ENCODE measurements at regions of chr19 and their contacts with region 1.

Region 1: DNA sequence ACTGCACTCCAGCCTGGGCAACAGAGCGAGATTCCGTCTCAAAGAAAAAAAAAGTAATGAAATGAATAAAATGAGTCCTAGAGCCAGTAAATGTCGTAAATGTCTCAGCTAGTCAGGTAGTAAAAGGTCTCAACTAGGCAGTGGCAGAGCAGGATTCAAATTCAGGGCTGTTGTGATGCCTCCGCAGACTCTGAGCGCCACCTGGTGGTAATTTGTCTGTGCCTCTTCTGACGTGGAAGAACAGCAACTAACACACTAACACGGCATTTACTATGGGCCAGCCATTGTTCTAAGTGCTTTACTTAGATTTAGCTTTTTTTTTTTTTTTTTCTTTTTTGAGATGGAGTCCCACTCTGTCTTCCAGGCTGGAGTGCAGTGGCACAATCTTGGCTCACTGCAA is 30.2 kb downstream of the CYP2F1 start:
- DNase-seq: peak; percentile 82
- H3K4me3 ChIP-seq: no peak overlapping the region
- H3K4me3 Mint-ChIP-seq: no peak overlapping the region
- H3K27ac Mint-ChIP-seq: no peak overlapping the region
- H3K4me1 ChIP-seq: no peaks in the 10 kb centered on the region
- H3K4me1 Mint-ChIP-seq: no peaks in the 10 kb centered on the region
- H3K27me3 ChIP-seq: no peaks in the 10 kb centered on the region
- H3K27me3 Mint-ChIP-seq: no peaks in the 10 kb centered on the region
- CTCF ChIP-seq: peak; percentile 75 to 77

Region 2: GRCh38 chr19:40662921-40663694 is 481.3 kb before region 1 on chr19:
- CTCF ChIA-PET with region 1: no interaction called
- POLR2A ChIA-PET with region 1: no interaction called
- intact Hi-C with region 1: loop called (anchors 2 kb)
- DNase-seq: peak; percentile 88 to 95
- H3K4me3 ChIP-seq: peak overlapping the region; percentile 86
- H3K4me3 Mint-ChIP-seq: peak overlapping the region; percentile 82
- H3K27ac Mint-ChIP-seq: peak overlapping the region; percentile 68
- H3K4me1 ChIP-seq: no peaks in the 10 kb centered on the region
- H3K4me1 Mint-ChIP-seq: no peaks in the 10 kb centered on the region
- H3K27me3 ChIP-seq: no peaks in the 10 kb centered on the region
- H3K27me3 Mint-ChIP-seq: no peaks in the 10 kb centered on the region
- CTCF ChIP-seq: peak; percentile 94 to 98

Region 3: GRCh38 chr19:40974633-40975037 is 169.8 kb before region 1 on chr19:
- CTCF ChIA-PET with region 1: no interaction called
- POLR2A ChIA-PET with region 1: no interaction called
- intact Hi-C with region 1: loop called (anchors 1 kb)
- DNase-seq: peak; percentile 68 to 69
- H3K4me3 ChIP-seq: no peak overlapping the region
- H3K4me3 Mint-ChIP-seq: no peak overlapping the region
- H3K27ac Mint-ChIP-seq: no peak overlapping the region
- H3K4me1 ChIP-seq: peaks cover 2% of the 10 kb centered on the region
- H3K4me1 Mint-ChIP-seq: peaks cover 3% of the 10 kb centered on the region
- H3K27me3 ChIP-seq: no peaks in the 10 kb centered on the region
- H3K27me3 Mint-ChIP-seq: no peaks in the 10 kb centered on the region
- CTCF ChIP-seq: peak; percentile 62 to 82

Region 4: GRCh38 chr19:41192574-41193429 is 48.4 kb after region 1 on chr19 and contains the start of gene CYP2S1:
- CTCF ChIA-PET with region 1: no interaction called
- POLR2A ChIA-PET with region 1: no interaction called
- intact Hi-C with region 1: no loop called
- DNase-seq: peak; percentile 85 to 90
- H3K4me3 ChIP-seq: peak within 1 kb of the TSS; percentile 85
- H3K4me3 Mint-ChIP-seq: peak within 1 kb of the TSS; percentile 76
- H3K27ac Mint-ChIP-seq: peak within 1 kb of the TSS; percentile 43
- H3K4me1 ChIP-seq: peaks cover 23% of the 10 kb centered on the region
- H3K4me1 Mint-ChIP-seq: peaks cover 25% of the 10 kb centered on the region
- H3K27me3 ChIP-seq: no peaks in the 10 kb centered on the region
- H3K27me3 Mint-ChIP-seq: no peaks in the 10 kb centered on the region
- CTCF ChIP-seq: no peak
- total RNA-seq, gene CYP2S1: 56.0 and 63.0 TPM in 2 replicates

Region 5: DNA sequence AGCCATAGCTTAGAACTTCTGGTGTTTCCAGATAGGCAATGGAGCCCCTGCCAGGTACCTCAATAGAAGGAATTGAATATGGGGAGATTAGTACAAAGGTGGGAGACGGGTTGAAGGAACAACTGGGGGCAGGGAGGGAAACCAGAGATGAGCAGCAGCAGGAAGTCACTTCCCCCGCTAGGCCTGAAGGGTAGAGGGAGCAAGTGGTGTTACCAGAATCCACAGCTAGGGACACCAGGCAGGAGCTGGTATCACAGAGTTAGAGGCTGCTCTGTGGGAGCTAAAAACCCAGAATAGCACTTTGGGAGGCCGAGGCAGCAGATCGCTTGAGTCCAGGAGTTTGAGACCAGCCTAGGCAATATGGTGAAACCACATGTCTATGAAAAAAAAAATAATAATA is 104.5 kb after region 1 on chr19:
- CTCF ChIA-PET with region 1: no interaction called
- POLR2A ChIA-PET with region 1: no interaction called
- intact Hi-C with region 1: no loop called
- DNase-seq: no peak
- H3K4me3 ChIP-seq: no peak overlapping the region
- H3K4me3 Mint-ChIP-seq: no peak overlapping the region
- H3K27ac Mint-ChIP-seq: no peak overlapping the region
- H3K4me1 ChIP-seq: peaks cover 11% of the 10 kb centered on the region
- H3K4me1 Mint-ChIP-seq: peaks cover 6% of the 10 kb centered on the region
- H3K27me3 ChIP-seq: no peaks in the 10 kb centered on the region
- H3K27me3 Mint-ChIP-seq: no peaks in the 10 kb centered on the region
- CTCF ChIP-seq: no peak

Region 6: DNA sequence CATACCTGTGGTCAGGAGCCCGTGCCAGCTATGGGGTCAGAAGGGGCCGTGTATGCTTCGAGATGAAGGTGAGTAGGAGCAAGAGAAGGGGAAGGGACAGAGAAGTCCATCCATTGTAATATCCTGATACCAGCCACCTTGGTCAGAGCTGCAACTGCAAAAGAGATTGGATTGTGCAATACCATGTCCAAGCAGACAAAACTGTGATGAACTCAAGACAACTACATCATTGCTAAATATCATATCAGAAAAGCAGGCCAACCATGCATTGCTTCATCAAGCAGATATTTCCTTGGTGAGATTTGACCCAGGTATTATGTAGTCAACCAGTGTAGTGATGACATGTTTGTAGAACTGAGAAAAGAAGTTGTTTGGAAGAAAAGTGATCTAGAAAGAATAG is 131.8 kb after region 1 on chr19:
- CTCF ChIA-PET with region 1: no interaction called
- POLR2A ChIA-PET with region 1: no interaction called
- intact Hi-C with region 1: no loop called
- DNase-seq: no peak
- H3K4me3 ChIP-seq: no peak overlapping the region
- H3K4me3 Mint-ChIP-seq: no peak overlapping the region
- H3K27ac Mint-ChIP-seq: no peak overlapping the region
- H3K4me1 ChIP-seq: no peaks in the 10 kb centered on the region
- H3K4me1 Mint-ChIP-seq: no peaks in the 10 kb centered on the region
- H3K27me3 ChIP-seq: no peaks in the 10 kb centered on the region
- H3K27me3 Mint-ChIP-seq: no peaks in the 10 kb centered on the region
- CTCF ChIP-seq: no peak